ENCODE measurements at regions of chr6 and their contacts with region 1.

Region 1: DNA sequence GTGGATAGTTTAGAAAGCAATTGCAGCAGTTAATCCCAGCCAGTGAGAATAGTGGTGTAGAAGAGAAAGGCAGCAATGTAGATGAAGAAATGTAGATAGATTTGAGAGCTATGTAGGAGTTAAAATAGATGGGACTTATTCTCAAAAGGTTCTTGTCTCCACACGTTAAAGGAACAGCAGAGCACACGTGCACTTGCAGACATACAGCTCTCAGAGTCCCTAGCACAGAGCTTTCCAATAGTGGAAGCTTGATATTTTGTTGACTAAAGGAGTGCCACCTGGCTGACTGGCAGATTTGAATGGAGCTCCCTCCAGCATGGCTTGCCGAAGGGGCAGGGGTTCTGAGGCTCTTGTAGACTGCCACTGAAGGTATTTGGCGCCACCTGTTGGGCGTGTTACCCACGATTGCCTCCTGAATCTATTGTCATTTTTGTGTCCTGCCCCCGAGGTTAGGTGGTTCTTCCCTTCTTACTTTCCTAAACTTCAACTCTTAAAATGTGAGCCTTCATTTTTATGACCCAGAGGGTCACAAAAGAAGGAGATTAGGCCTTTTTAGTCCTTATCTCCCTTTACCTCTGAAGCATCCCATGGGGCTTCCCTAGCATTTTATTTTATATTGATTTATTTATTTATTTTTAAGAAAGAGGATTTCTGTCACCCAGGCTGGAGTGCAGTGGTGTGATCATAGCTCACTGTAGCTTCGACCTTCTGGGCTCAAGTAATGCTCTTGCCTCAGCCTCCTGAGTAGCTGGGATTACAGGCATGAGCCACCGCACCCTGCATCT is 16.4 kb downstream of the BRD2 start:
- DNase-seq: peak; percentile 94 to 99
- ATAC-seq: peak; percentile 84

Region 2: DNA sequence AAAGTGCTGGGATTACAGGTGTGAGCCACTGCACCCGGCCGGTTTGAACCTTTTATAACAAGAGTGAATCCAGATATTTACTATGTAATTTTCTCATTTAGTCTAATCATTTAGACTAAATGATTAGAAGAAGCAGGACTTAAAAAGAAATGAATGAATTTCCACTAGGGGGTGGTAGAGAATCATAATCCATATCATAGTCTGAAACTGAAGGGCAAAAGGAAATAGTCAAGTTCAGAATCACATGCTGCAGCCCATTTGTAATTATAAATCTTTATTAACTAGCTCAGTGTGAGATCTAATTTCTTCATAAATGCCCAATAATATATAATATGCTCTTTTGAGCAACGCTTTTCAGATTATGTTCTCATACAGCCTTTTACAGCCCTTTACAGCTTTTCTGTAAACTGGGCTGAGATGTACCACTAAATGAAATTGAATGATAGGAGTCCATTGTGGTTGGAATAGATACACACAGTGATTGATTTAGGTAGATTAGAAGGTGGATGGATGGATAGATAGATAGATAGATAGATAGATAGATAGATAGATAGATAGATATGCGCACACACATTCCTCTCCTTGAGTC is 99.0 kb before region 1 on chr6:
- intact Hi-C with region 1: loop called in 1 of 2 experiments (anchors 5 kb)
- DNase-seq: no peak
- ATAC-seq: peak; percentile 74

Region 3: DNA sequence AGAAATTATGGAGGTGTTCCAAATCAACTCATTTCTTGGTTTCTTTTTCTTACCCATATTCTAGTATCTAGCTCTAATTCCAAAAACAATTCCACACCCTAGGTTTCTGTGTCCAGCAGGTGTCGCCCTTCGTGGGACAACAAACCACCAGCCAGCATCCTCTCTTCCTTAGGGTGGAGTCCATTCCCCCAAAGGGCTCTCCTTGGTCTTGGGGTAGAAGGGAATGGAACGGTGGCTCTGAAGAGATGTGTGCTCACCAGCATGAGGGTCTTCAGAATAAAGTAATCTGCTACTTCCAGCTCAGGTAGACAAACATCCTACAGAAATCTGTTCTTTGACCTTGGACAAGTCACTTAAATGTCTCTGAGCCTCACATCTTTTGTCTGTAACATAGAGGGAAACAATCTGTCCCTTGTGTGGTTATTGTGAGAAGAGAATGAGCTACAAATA is 51.1 kb before region 1 on chr6:
- intact Hi-C with region 1: loop called (anchors 5 to 10 kb)
- DNase-seq: peak; percentile 65 to 91
- ATAC-seq: peak; percentile 79